Cardiac septum (tissue), 1 donor: ENCODE measurements at regions of chr4 and their contacts with region 1.

Region 1: GRCh38 chr4:139651282-139652194 is 14.1 kb upstream of the MGST2 start:
- DNase-seq: peak; percentile 90

Region 2: GRCh38 chr4:139472852-139473251 is 178.7 kb before region 1 on chr4:
- intact Hi-C with region 1: no loop called
- DNase-seq: no peak

Region 3: DNA sequence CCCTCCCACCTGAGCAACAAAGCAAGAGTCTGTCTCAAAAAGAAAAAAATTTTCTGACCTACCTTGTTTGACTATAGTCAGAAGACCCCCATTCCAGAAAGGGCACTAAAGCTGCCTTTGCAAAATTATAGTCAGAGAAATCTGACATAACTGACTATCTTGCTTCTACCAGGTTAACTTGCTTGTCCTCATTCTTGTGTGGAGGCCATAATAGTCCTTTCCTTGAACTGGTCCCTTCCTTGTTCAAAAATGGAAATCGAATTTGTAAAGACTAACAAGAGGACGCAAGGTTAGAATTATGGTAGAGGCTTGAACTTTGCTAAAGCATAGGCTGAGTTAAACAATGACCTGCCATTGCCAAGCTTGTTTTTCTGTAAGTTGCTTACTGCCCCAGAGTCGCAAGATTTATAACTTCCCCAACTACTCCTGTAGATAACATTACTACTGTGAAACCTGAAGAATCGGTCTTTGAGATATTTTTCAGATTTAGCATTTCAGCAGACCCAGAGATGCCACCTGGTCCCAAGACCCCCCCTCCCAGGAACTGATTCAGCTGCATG is 152.4 kb before region 1 on chr4:
- intact Hi-C with region 1: loop called (anchors 5 kb)
- DNase-seq: no peak

Region 4: DNA sequence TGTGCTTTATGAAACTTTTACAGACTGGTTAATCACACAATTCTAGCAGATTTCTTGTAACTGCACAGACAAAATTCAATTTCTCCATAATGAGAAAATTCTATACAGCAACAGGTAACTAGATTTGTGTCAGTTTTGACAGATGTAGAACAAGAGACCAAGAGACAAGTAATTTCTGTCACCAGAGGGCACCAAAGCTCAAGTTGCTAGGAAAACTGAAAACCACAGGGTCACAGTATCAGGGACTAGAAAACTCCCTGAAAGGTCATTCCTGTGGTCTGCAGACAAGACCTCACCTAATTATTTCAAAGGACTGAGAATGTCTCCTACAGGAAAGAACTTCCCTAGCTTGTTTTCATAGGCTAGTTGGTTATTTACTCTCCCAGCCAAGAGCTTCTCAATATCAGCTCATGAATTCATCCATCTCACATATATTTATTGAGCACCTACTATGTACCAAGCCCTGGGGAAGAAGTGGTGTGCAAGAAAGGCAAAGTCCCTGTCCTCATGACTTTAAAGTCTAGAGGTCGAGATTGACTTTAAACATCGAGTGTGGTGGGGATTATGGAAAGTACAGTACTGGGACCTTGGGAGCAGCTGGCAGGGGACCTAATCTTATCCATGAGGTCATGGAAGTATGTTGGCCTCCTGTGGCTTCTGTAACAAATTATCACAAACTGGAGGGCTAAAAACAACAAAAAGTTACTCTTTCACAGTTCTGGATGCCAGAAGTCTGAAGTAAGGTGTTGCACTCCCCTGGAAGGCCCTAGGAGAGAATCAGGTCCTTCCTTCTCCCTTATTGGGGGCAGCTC is 47.8 kb before region 1 on chr4:
- intact Hi-C with region 1: loop called (anchors 2 kb)
- DNase-seq: no peak

Region 5: GRCh38 chr4:139841464-139842246 is 190.1 kb after region 1 on chr4:
- intact Hi-C with region 1: no loop called
- DNase-seq: no peak